ENCODE measurements at regions of chr12 and their contacts with region 1.

Region 1: DNA sequence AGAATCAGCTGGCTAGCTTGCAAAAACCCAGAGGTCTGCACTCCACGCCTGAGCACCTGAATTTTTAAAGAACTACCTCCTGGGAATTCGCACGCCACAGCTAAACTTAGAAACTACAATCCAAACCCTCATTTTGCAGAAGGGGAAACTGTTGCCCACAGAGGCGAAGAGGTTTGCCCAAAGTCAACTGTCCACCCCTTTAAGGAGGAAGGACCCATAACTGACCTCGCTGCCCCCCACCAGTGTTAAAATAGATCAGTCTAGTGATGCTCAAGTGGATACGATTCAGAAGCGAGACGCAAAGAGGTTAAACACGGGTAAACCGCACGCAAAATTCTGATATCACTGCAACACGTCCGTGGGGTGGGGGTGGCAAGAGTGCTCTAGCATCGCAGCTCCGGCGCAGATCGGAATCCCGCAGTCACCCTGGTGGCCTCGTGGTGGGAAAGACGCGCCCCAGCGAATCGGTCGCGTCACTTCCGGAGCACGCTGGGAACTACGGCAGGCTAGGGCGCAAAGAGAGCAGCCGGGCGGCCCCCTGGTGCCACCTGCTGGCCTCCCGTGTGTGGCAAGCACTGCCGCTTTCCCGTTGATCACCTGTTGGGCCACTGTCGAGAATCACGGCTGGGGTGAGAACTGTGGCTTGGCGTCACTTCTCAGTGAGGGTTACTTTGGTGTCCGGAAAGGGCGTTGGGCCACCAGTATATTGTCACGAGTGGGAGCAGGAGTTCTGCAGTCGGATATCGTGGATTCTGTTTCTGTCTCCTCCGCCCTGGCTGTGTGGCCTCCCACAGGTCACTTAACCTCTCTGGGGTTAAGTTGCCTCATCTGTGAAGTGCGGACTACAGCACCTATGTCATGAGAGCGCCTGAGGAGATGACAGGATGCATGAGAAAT is at the start of gene ALKBH2:
- DNase-seq: peak; percentile 90
- ATAC-seq: peak; percentile 68
- H3K4me3 Mint-ChIP-seq: peak within 1 kb of the TSS; percentile 88
- H3K27ac Mint-ChIP-seq: peak within 1 kb of the TSS; percentile 92
- H3K4me1 Mint-ChIP-seq: peaks cover 33% of the 10 kb centered on the region
- H3K27me3 Mint-ChIP-seq: no peaks in the 10 kb centered on the region
- CTCF ChIP-seq: peak; percentile 92
- total RNA-seq, gene ALKBH2: 21.3 and 24.1 TPM in 2 replicates

Region 2: GRCh38 chr12:107093417-107094182 is 1999.7 kb before region 1 on chr12 and contains the start of gene CRY1:
- CTCF ChIA-PET with region 1: no interaction called
- POLR2A ChIA-PET with region 1: no interaction called
- intact Hi-C with region 1: loop called (anchors 10 kb)
- DNase-seq: peak; percentile 84
- ATAC-seq: peak; percentile 83
- H3K4me3 Mint-ChIP-seq: no peak within 1 kb of the TSS
- H3K27ac Mint-ChIP-seq: no peak within 1 kb of the TSS
- H3K4me1 Mint-ChIP-seq: peaks cover 6% of the 10 kb centered on the region
- H3K27me3 Mint-ChIP-seq: peaks cover 8% of the 10 kb centered on the region
- CTCF ChIP-seq: no peak
- total RNA-seq, gene CRY1: 4.6 and 7.1 TPM in 2 replicates

Region 3: DNA sequence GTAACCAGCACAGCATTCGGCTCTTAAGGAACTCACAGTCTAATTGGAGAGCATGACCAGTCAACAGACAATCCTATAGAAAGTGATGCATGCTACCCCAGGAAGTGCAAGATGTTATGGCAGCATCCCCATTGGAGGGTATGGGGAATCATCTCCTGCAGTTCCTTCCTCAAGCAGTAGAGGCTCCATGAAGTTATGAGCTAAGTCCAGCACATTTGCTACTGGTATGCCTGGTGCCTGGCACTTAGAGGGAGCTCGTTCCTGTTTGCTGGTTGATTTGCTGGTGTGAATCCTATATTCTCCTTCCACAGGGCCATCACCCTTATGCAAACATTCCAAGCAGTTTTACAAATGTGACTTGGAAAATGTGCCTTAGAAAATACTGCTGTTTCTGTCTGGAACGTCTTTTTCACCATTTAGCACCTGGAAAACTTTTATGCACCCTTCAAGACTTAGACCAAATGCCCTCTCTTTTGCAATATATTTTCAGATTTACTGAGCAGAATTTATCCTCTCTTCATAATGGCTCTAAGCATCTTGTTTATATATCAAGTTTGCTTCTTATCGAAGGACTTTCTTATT is 1100.3 kb before region 1 on chr12:
- CTCF ChIA-PET with region 1: no interaction called
- POLR2A ChIA-PET with region 1: no interaction called
- intact Hi-C with region 1: loop called (anchors 2 kb)
- DNase-seq: no peak
- ATAC-seq: peak; percentile 31
- H3K4me3 Mint-ChIP-seq: no peak overlapping the region
- H3K27ac Mint-ChIP-seq: no peak overlapping the region
- H3K4me1 Mint-ChIP-seq: no peaks in the 10 kb centered on the region
- H3K27me3 Mint-ChIP-seq: peaks cover 29% of the 10 kb centered on the region
- CTCF ChIP-seq: no peak

Region 4: DNA sequence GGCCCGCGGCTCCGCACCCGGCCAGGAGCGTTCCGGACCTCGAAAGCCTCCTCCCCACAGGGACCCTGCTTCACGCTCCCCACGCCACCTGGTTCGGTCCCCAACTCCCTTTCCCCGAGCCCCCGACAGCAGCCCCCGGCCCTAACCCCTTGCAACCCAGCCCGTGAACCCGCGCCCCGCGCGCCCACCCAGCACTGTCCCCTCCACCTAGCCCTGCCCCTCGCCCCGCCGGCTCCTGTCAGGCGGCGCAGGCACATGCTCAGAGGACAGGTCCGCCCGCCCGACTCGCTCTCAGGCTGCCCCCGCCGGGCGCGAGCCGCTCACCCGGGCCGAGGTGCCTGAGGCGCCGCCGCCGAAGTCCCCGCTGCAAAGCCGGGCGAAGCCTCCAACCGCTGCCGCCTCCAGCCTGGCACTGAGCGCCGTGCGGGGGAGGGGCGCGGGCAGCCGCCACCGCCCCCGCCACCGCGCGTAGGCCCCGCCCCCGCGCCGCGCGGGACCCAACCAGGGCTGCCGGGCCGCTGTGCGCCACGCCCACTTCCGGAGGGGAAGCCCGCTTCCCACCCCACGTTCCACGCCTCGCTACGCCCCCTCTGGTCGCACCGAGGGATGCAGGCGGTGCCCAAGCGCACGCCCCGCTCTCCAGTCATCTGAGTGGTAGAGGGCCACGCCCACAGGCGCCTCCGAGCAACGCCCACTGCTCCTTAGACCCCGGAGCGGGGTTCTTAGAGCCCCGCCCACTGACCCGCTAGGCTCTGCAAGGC is 362.0 kb before region 1 on chr12 and contains the start of gene CORO1C:
- CTCF ChIA-PET with region 1: no interaction called
- POLR2A ChIA-PET with region 1: no interaction called
- intact Hi-C with region 1: loop called (anchors 1 kb)
- DNase-seq: peak; percentile 98
- ATAC-seq: peak; percentile 73
- H3K4me3 Mint-ChIP-seq: peak within 1 kb of the TSS; percentile 97
- H3K27ac Mint-ChIP-seq: peak within 1 kb of the TSS; percentile 96
- H3K4me1 Mint-ChIP-seq: peaks cover 48% of the 10 kb centered on the region
- H3K27me3 Mint-ChIP-seq: no peaks in the 10 kb centered on the region
- CTCF ChIP-seq: no peak
- total RNA-seq, gene CORO1C: 68.3 and 69.4 TPM in 2 replicates

Region 5: GRCh38 chr12:108884116-108885012 is 208.9 kb before region 1 on chr12:
- CTCF ChIA-PET with region 1: interaction called, 7 read pairs
- POLR2A ChIA-PET with region 1: no interaction called
- intact Hi-C with region 1: loop called (anchors 1 kb)
- DNase-seq: peak; percentile 43
- ATAC-seq: peak; percentile 89
- H3K4me3 Mint-ChIP-seq: no peak overlapping the region
- H3K27ac Mint-ChIP-seq: no peak overlapping the region
- H3K4me1 Mint-ChIP-seq: no peaks in the 10 kb centered on the region
- H3K27me3 Mint-ChIP-seq: no peaks in the 10 kb centered on the region
- CTCF ChIP-seq: no peak

Region 6: GRCh38 chr12:109110988-109111495 is 17.8 kb after region 1 on chr12:
- CTCF ChIA-PET with region 1: interaction called, 19 read pairs
- POLR2A ChIA-PET with region 1: interaction called, 4 read pairs
- intact Hi-C with region 1: no loop called
- DNase-seq: peak; percentile 31
- ATAC-seq: peak; percentile 86
- H3K4me3 Mint-ChIP-seq: peak overlapping the region; percentile 77
- H3K27ac Mint-ChIP-seq: no peak overlapping the region
- H3K4me1 Mint-ChIP-seq: peaks cover 6% of the 10 kb centered on the region
- H3K27me3 Mint-ChIP-seq: no peaks in the 10 kb centered on the region
- CTCF ChIP-seq: no peak